Dendritic cell treated with granulocyte-macrophage colony-stimulating factor and Interleukin-4, amounts not matched to agents 40 ng/mL and 50 ng/mL, for 4 days (primary cell): ENCODE measurements at regions of chr5 and their contacts with region 1.

Region 1: DNA sequence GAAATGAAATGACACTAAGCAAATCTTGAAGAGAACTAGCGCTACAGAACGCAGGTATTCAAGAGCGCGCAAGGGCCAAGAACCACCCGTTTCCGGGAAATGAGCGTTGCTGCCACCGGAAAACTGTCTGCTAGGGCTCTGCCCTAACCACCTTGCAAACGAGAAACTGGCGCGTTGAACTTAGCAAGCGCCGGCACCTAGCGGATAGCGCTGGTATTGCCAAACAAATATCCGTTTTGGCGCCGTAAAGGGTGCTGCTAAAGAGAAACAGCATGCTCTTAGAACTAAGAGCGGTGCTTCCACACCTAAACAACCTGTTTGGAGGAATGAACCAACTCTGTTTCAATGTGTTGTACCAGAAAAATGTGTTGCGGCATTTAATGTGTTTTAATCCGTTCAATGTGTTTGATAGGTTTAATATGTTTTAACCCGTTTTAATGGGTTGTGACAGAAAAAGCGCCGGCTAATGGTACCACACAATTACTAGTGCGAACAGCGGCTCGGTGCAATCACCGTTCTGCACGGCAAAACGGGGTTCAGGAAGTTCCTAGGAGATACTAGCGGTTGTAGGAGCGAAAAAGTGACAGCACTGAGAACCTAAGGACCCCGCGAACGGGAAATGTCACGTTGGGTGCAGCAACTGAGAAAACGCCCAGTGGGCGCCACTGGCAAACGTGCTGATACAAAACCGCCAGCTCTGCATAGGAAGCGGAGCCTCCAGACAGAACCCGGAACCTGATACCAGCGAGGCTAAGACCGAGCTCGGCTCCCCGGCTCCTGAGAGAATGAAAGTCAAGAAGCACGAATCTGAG is at the start of gene ANXA2R:
- H3K4me3 Mint-ChIP-seq: peak within 1 kb of the TSS; percentile 88
- H3K27ac Mint-ChIP-seq: peak within 1 kb of the TSS; percentile 100
- H3K4me1 Mint-ChIP-seq: peaks cover 43% of the 10 kb centered on the region
- H3K27me3 Mint-ChIP-seq: no peaks in the 10 kb centered on the region

Region 2: DNA sequence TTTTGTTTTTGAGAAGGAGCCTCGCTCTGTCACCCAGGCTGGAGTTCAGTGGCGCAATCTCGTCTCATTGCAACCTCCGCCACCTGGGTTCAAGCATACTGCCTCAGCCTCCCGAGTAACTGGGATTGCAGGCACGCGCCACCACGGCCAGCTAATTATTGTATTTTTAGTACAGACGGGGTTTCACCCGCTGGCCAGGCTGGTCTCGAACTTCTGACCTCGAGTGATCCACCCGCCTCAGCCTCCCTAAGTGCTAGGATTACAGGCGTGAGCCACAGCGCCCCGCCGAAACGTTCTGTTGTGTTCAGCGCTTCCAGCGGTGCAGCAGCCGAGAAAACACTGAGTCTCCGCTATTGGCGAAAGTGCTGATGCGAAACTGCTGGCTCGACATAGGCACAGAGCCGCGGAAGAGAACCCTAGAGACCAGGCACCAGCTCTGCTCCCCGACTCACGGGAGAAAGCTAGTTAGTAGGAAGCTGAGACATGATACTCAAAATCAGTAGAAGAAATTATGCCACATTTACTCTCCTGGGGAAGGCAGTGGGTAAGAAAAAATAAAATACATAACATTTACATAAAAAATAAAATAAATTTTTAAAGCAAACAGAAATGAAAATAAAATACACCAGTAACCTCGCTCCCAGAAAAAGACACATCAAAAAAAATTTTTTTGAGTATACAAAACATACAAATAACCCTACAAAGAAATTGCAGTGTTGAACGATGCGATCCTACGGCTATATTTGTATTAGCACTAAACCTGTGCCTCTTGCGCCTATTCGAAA is 31.9 kb before region 1 on chr5:
- intact Hi-C with region 1: loop called (anchors 1 kb)
- H3K4me3 Mint-ChIP-seq: peak overlapping the region; percentile 82
- H3K27ac Mint-ChIP-seq: peak overlapping the region; percentile 98
- H3K4me1 Mint-ChIP-seq: peaks cover 39% of the 10 kb centered on the region
- H3K27me3 Mint-ChIP-seq: no peaks in the 10 kb centered on the region

Region 3: DNA sequence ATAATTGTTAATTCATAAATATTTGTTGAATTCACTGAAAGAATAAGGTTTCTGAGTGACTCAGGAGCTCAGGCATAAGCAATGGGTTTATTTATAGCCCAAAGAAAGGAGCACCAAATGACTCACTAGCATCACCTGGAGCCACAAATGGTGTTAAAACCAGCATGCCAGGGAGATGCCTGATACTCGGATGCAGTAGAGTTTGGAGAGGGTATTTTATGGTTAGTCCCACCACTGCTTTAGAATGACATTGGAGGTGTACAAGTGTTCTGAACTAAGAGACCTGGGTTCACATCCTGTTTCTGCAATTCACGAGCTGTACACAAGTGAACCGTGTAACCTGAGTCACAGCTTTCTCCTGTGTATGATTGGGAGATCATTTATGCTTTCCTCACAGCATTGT is 346.5 kb after region 1 on chr5:
- intact Hi-C with region 1: no loop called
- H3K4me3 Mint-ChIP-seq: no peak overlapping the region
- H3K27ac Mint-ChIP-seq: no peak overlapping the region
- H3K4me1 Mint-ChIP-seq: peaks cover 18% of the 10 kb centered on the region
- H3K27me3 Mint-ChIP-seq: no peaks in the 10 kb centered on the region

Region 4: GRCh38 chr5:43874772-43875171 is 834.3 kb after region 1 on chr5:
- intact Hi-C with region 1: no loop called
- H3K4me3 Mint-ChIP-seq: no peak overlapping the region
- H3K27ac Mint-ChIP-seq: no peak overlapping the region
- H3K4me1 Mint-ChIP-seq: no peaks in the 10 kb centered on the region
- H3K27me3 Mint-ChIP-seq: no peaks in the 10 kb centered on the region